ENCODE measurements at regions of chr1 and their contacts with region 1.

Region 1: DNA sequence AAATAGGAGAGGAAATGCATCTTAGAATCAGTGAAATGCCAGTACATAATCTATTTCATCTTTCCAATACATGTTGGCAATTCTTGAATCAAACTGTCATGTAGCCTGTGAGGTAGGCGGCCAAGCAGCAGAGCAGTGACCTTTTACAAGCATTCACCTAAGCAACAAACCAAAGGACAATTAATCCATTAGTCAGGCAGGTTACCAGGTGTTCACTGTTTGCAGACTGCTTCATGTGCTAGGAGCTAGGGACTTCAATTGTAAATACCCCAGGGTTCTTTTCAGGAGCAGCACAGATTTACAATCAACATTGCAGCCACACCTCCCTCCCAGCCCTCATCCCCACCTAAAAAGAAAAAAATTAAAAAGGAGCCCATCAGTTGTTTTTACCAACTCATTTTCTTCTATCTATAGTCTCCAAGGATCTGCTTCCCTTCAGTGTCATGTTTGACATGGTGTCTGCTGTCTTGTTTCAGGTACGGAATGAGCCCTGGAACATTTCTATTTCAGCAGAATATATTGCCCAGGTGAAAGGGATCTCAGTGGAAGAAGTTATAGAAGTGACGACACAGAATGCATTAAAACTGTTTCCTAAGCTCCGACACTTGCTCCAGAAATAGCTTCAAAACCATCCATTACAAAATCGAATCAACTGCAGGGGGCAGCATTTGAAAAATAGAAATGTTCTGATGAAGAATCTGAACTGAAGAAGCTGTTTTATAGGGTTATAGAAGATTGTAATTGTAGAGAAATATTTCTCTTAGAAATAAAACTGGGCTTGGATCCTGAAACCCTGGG is 23.0 kb downstream of the TATDN3 start:
- DNase-seq: peak in 2 of 14 experiments; percentile 23
- ATAC-seq: no peak
- H3K4me3 ChIP-seq: no peak overlapping the region
- H3K4me3 Mint-ChIP-seq: no peak overlapping the region
- H3K27ac ChIP-seq: no peak overlapping the region
- H3K27ac Mint-ChIP-seq: no peak overlapping the region
- H3K4me1 ChIP-seq: no peaks in the 10 kb centered on the region
- H3K4me1 Mint-ChIP-seq: no peaks in the 10 kb centered on the region
- H3K27me3 ChIP-seq: no peaks in the 10 kb centered on the region
- H3K27me3 Mint-ChIP-seq: no peaks in the 10 kb centered on the region
- CTCF ChIP-seq: peak; percentile 25

Region 2: GRCh38 chr1:212915245-212916091 is 100.7 kb after region 1 on chr1:
- CTCF ChIA-PET with region 1: no interaction called
- POLR2A ChIA-PET with region 1: no interaction called
- intact Hi-C with region 1: no loop called
- DNase-seq: no peak
- ATAC-seq: no peak
- H3K4me3 ChIP-seq: no peak overlapping the region
- H3K4me3 Mint-ChIP-seq: no peak overlapping the region
- H3K27ac ChIP-seq: no peak overlapping the region
- H3K27ac Mint-ChIP-seq: no peak overlapping the region
- H3K4me1 ChIP-seq: no peaks in the 10 kb centered on the region
- H3K4me1 Mint-ChIP-seq: no peaks in the 10 kb centered on the region
- H3K27me3 ChIP-seq: peaks cover 0 to 2% of the 10 kb centered on the region in 2 experiments
- H3K27me3 Mint-ChIP-seq: peaks cover 8% of the 10 kb centered on the region
- CTCF ChIP-seq: no peak

Region 3: DNA sequence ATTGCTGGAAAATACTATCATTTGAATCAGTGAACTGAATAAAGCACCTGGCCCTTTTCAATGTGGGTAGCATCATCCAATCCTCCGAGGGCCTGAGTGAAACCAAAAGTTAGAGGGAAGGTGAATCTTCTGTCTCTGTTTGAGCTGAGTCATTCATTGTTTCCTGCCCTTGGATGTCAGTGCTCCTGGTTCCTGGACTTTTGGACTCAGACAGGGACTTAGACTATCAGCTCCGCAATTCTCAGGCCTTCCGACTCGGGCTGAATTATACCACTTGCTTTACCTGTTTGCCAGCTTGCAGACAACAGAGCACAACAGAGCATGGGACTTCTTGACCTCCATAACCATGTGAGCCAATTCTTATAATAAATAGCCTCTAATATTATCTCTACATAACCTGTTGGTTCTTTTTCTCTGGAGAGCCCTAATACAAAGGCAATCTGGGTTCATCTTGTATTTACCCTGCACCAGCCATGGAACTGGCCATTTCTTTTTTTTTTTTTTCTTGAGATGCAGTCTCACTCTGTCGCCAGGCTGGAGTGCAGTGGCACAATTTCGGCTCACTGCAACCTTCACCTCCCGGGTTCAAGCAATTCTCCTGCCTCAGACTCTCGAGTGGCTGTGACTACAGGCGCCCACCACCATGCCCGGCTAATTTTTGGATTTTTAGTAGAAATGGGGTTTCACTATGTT is 116.4 kb after region 1 on chr1:
- CTCF ChIA-PET with region 1: no interaction called
- POLR2A ChIA-PET with region 1: no interaction called
- intact Hi-C with region 1: no loop called
- DNase-seq: no peak
- ATAC-seq: no peak
- H3K4me3 ChIP-seq: no peak overlapping the region
- H3K4me3 Mint-ChIP-seq: no peak overlapping the region
- H3K27ac ChIP-seq: no peak overlapping the region
- H3K27ac Mint-ChIP-seq: no peak overlapping the region
- H3K4me1 ChIP-seq: no peaks in the 10 kb centered on the region
- H3K4me1 Mint-ChIP-seq: no peaks in the 10 kb centered on the region
- H3K27me3 ChIP-seq: no peaks in the 10 kb centered on the region
- H3K27me3 Mint-ChIP-seq: no peaks in the 10 kb centered on the region
- CTCF ChIP-seq: no peak

Region 4: DNA sequence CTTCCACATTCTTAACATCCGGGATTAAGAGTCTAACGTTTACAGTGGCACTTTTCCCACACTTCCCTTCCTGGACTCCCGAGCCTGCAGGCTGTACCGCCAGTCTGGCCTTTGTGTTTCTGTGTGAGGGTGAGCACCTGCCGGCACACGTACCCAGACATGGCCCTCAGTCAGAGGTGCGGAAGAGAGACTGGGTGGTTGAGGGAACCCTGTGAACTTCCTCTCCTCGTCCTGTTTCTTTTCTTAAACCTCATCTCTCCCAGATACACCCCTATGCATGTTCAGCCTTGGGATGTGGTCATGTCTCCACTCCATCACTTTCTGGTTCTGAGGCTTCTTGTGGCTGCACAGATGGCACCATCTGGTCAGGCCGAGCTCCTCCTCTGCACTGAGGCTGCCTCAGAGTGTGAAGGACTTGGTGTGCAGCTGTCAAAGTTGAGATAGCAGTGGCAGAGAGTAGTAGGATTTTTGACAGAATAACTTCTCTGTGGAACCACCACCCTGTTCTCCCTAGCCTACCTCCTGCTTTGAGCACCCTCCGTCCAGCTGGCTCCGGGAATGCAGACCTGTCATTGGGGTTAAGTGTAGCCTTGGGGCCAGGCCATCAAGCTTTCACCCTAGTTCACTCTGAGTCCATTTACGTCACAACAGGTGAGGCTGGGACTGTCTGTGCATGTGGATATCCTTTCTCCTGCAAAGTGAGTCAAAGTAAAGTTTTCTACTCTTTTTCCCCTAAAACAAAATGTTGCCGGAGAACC is 167.0 kb after region 1 on chr1:
- CTCF ChIA-PET with region 1: no interaction called
- POLR2A ChIA-PET with region 1: no interaction called
- intact Hi-C with region 1: loop called in 1 of 2 experiments (anchors 5 kb)
- DNase-seq: peak in 2 of 14 experiments; percentile 8 to 23
- ATAC-seq: no peak
- H3K4me3 ChIP-seq: no peak overlapping the region
- H3K4me3 Mint-ChIP-seq: no peak overlapping the region
- H3K27ac ChIP-seq: no peak overlapping the region
- H3K27ac Mint-ChIP-seq: peak overlapping the region; percentile 25
- H3K4me1 ChIP-seq: peaks cover 37% of the 10 kb centered on the region
- H3K4me1 Mint-ChIP-seq: peaks cover 5% of the 10 kb centered on the region
- H3K27me3 ChIP-seq: peaks cover 0 to 6% of the 10 kb centered on the region in 2 experiments
- H3K27me3 Mint-ChIP-seq: no peaks in the 10 kb centered on the region
- CTCF ChIP-seq: no peak

Region 5: GRCh38 chr1:212994926-212995325 is 180.2 kb after region 1 on chr1:
- CTCF ChIA-PET with region 1: interaction called, 7 read pairs
- POLR2A ChIA-PET with region 1: interaction called, 4 read pairs
- intact Hi-C with region 1: loop called in 1 of 2 experiments (anchors 1 kb)
- DNase-seq: no peak
- ATAC-seq: no peak
- H3K4me3 ChIP-seq: no peak overlapping the region
- H3K4me3 Mint-ChIP-seq: no peak overlapping the region
- H3K27ac ChIP-seq: no peak overlapping the region
- H3K27ac Mint-ChIP-seq: no peak overlapping the region
- H3K4me1 ChIP-seq: no peaks in the 10 kb centered on the region
- H3K4me1 Mint-ChIP-seq: peaks cover 8% of the 10 kb centered on the region
- H3K27me3 ChIP-seq: no peaks in the 10 kb centered on the region
- H3K27me3 Mint-ChIP-seq: no peaks in the 10 kb centered on the region
- CTCF ChIP-seq: no peak

Measured in CD4-positive, alpha-beta T cell (primary cell).